Heart left ventricle (tissue), 16 donors: ENCODE measurements at regions of chr4 and their contacts with region 1.

Region 1: GRCh38 chr4:98143001-98143899 is at the start of gene STPG2:
- DNase-seq: peak; percentile 91 to 97 (median 96)
- ATAC-seq: peak; percentile 100
- H3K4me3 ChIP-seq: peak within 1 kb of the TSS; percentile 52 to 88 (median 72)
- H3K27ac ChIP-seq: peak within 1 kb of the TSS; percentile 33 to 91 (median 83)
- H3K4me1 ChIP-seq: peaks cover 0 to 9% (median 0%) of the 10 kb centered on the region in 12 donors
- H3K27me3 ChIP-seq: no peaks in the 10 kb centered on the region
- CTCF ChIP-seq: peak; percentile 7 to 60 (median 38)
- POLR2A ChIP-seq: peak in 1 of 2 donors; percentile 63
- total RNA-seq, gene STPG2: 0.16 to 0.71 (median 0.32) TPM in 7 of 9 donors, not detected in the others

Region 2: GRCh38 chr4:98030059-98030458 is 113.2 kb before region 1 on chr4:
- intact Hi-C with region 1: no loop called
- DNase-seq: no peak
- ATAC-seq: no peak
- H3K4me3 ChIP-seq: no peak overlapping the region
- H3K27ac ChIP-seq: no peak overlapping the region
- H3K4me1 ChIP-seq: no peaks in the 10 kb centered on the region
- H3K27me3 ChIP-seq: no peaks in the 10 kb centered on the region
- CTCF ChIP-seq: no peak
- POLR2A ChIP-seq: no peak

Region 3: DNA sequence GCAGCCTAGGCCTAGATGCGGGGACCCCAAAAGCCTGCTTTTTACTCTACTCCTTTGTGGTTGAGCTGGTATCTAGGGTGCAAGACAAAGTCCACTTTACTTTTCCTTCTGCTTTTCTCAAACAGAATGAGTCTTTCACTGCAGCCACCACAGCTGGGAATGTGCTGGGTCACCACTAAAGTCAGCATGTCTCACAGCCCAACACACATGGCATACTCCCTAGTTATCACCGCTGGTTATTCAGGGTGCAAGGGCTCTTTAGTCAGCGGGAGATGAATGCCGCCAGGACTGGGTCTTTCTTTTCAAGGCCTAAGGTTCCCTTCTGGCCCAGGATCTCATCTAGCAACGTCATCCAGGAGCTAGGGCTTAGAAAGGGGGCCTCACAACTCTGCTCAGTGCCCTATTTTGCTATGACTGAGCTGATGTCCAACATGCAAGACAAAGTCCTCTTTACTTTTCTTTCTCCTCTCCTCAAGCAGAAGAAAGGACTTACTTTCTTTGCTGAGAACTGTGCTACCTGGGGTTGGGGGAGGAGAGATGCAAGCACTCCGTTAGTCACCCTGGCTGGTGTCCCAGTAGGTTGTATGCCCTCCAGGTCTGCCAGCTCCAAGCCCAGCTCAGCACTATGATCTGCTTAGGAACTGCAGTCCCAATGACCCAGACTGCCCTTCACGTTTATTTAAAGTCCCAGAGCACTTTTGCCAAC is 22.9 kb after region 1 on chr4:
- intact Hi-C with region 1: loop called in 1 of 10 experiments (anchors 1 kb)
- DNase-seq: peak; percentile 60 to 86 (median 63)
- ATAC-seq: peak; percentile 98 to 100 (median 99)
- H3K4me3 ChIP-seq: no peak overlapping the region
- H3K27ac ChIP-seq: peak overlapping the region in 4 of 12 donors; percentile 30 to 61 (median 50)
- H3K4me1 ChIP-seq: peaks cover 0 to 5% (median 0%) of the 10 kb centered on the region in 12 donors
- H3K27me3 ChIP-seq: no peaks in the 10 kb centered on the region
- CTCF ChIP-seq: no peak
- POLR2A ChIP-seq: no peak

Region 4: GRCh38 chr4:98199209-98199608 is 56.0 kb after region 1 on chr4:
- intact Hi-C with region 1: loop called in 1 of 10 experiments (anchors 2 kb)
- DNase-seq: peak in 3 of 5 donors; percentile 10 to 55 (median 38)
- ATAC-seq: peak; percentile 55 to 91 (median 82)
- H3K4me3 ChIP-seq: no peak overlapping the region
- H3K27ac ChIP-seq: peak overlapping the region in 2 of 12 donors; percentile 4 to 26
- H3K4me1 ChIP-seq: no peaks in the 10 kb centered on the region
- H3K27me3 ChIP-seq: no peaks in the 10 kb centered on the region
- CTCF ChIP-seq: peak in 9 of 12 donors; percentile 3 to 37 (median 22)
- POLR2A ChIP-seq: no peak

Region 5: GRCh38 chr4:98253499-98253898 is 110.2 kb after region 1 on chr4:
- intact Hi-C with region 1: loop called in 1 of 10 experiments (anchors 10 kb)
- DNase-seq: no peak
- ATAC-seq: no peak
- H3K4me3 ChIP-seq: no peak overlapping the region
- H3K27ac ChIP-seq: no peak overlapping the region
- H3K4me1 ChIP-seq: no peaks in the 10 kb centered on the region
- H3K27me3 ChIP-seq: no peaks in the 10 kb centered on the region
- CTCF ChIP-seq: no peak
- POLR2A ChIP-seq: no peak

Region 6: DNA sequence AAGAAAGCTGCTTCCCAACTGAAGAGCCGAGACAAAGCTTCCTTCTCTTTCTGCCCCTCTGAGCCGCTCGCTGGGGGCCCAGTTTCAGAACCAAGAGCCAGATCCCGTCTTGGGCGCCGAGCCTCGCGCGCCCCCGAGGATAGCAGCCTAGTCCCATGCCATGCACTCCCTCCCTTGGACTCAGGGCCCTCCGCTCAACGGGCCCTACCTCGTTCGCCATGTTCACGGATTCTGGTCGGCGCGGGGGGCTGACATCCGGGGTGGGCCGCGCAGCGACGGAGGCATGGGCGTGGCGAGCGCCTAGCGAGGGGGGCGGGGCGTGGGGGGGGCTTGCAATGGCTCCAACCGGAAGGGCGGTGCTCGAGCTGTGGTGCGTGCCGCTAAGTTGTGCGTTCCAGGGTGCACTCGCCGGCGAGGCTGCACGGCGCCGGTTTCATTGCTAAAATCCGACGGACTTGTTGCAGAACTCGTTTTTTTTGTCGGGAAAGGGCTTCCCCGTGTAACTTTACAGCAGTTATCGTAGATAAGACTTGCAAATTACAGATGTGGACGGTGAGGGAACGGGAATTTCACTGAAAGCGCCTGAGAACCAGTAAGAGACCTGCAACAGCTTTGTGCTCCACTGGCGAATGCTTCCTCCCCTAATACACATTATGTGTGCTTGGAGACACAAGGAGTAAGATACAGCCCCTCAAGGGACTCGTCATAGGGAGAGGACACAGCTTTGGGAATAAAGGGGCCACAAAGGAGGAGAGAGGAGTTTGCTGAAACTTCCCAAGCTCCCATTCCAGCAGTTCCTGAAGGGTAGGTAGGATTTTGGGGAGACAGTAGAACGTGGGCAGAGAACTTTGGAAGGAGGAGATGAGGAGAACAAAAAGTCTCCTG is 945.5 kb after region 1 on chr4 and contains the start of gene ADH5:
- intact Hi-C with region 1: loop called in 1 of 10 experiments (anchors 10 kb)
- DNase-seq: peak; percentile 90 to 94 (median 93)
- ATAC-seq: peak; percentile 98 to 100 (median 98)
- H3K4me3 ChIP-seq: peak within 1 kb of the TSS; percentile 37 to 88 (median 69)
- H3K27ac ChIP-seq: peak within 1 kb of the TSS; percentile 84 to 96 (median 92)
- H3K4me1 ChIP-seq: peaks cover 0 to 57% (median 30%) of the 10 kb centered on the region in 12 donors
- H3K27me3 ChIP-seq: no peaks in the 10 kb centered on the region
- CTCF ChIP-seq: no peak
- POLR2A ChIP-seq: peak in 1 of 2 donors; percentile 82
- total RNA-seq, gene ADH5: 122 to 246 (median 145) TPM